Left cardiac atrium (tissue), 4 donors: ENCODE measurements at regions of chr16 and their contacts with region 1.

Region 1: GRCh38 chr16:52191531-52192134 is 355.3 kb downstream of the TOX3 start:
- DNase-seq: peak; percentile 26
- ATAC-seq: peak in 1 of 2 donors; percentile 50

Region 2: DNA sequence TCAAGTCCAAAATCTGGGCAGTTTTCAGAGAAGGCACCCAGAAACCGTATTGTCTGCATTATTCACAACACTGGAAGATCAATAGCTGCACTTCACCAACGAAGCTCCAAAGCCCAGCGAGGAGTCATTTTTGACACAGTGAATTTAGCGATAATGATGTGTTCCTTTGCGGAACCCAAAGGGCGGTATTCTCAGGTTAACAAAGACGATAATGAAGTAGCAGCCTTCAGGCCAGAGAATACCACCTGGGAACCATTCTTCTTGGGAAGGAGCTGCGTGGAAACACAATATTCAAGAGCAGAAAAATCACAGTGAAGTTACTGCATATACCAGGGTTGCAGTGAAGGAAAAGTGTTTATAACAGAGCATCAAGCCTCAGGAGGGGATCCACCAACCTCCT is 25.7 kb before region 1 on chr16:
- intact Hi-C with region 1: no loop called
- DNase-seq: no peak
- ATAC-seq: no peak

Region 3: GRCh38 chr16:52308051-52308450 is 116.4 kb after region 1 on chr16:
- intact Hi-C with region 1: no loop called
- DNase-seq: no peak
- ATAC-seq: no peak

Region 4: GRCh38 chr16:52912565-52913173 is 721.0 kb after region 1 on chr16:
- intact Hi-C with region 1: loop called (anchors 2 to 5 kb)
- DNase-seq: peak; percentile 56
- ATAC-seq: peak; percentile 67 to 76

Region 5: DNA sequence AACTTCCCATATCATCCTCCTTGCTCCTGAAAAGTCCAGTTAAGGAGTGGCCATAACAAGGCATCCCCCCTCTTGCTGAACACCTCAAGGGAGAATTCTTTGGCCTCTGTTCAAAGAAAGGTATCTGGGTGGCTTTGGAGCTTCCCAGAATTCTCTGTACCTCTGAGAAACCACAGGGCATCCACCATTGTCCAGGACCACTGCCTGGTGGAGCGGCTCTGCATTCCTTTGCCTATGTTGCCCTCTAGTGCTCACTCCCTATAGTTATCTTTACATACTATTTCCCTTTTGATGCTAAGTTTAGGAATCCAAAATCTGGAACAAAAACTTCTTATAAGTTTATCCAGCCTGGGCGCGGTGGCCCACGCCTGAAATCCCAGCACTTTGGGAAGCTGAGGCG is 830.7 kb after region 1 on chr16:
- intact Hi-C with region 1: loop called in 1 of 2 experiments (anchors 2 kb)
- DNase-seq: no peak
- ATAC-seq: peak; percentile 57 to 87